CD8-positive, alpha-beta T cell (primary cell): ENCODE measurements at regions of chr12 and their contacts with region 1.

Region 1: DNA sequence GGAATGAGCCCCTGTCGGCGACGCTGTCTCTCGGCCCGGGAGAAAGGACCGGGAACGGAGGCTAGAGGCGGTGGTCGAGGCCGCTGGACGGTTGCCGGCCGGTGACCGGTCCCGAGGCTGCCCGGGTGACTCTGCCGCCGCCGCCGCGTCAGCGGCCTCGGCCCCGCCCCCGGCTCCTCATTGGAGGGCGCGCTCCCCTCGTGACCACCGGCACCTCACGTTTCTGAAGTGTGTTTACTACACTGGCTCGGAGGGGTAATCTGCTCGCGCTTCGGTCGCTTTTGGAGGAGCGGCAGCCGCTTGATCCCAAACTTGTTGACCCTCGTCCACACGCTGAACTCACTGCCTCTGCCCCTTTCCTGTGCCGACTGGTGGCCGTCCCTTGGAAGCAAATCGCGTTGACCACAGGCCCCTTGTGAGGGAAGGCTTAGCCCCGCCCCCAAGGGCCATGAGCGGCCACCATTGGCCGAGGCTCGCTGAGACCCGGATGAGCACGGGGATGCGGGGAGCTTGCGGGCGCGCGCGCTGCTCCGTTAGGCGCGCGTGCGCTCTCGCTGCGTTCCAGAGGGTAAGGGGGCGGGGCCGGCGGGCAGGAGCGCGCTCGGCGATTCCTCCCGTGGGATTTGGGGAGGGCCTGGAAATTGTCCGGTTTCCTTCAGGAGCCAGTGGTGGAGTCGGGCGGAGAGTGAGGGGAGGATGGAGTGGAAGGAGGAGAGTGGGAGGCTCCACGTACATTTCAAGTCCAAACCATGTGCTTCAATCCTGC is at the start of gene CRY1:
- DNase-seq: peak; percentile 85 to 96 (median 92)
- ATAC-seq: peak; percentile 75
- H3K4me3 ChIP-seq: peak within 1 kb of the TSS; percentile 87 to 97
- H3K4me3 Mint-ChIP-seq: no peak within 1 kb of the TSS
- H3K27ac ChIP-seq: peak within 1 kb of the TSS; percentile 97 to 99
- H3K27ac Mint-ChIP-seq: no peak within 1 kb of the TSS
- H3K4me1 ChIP-seq: peaks cover 20% of the 10 kb centered on the region
- H3K4me1 Mint-ChIP-seq: peaks cover 16% of the 10 kb centered on the region
- H3K27me3 ChIP-seq: peaks cover 0 to 4% of the 10 kb centered on the region in 2 experiments
- H3K27me3 Mint-ChIP-seq: peaks cover 10% of the 10 kb centered on the region
- CTCF ChIP-seq: no peak
- total RNA-seq, gene CRY1: 80.8 to 83.0 TPM

Region 2: GRCh38 chr12:106302401-106303201 is 791.0 kb before region 1 on chr12 and contains the start of gene TCP11L2:
- CTCF ChIA-PET with region 1: no interaction called
- POLR2A ChIA-PET with region 1: interaction called, 3 read pairs
- intact Hi-C with region 1: loop called (anchors 1 to 2 kb)
- DNase-seq: peak; percentile 88 to 96 (median 93)
- ATAC-seq: peak; percentile 63
- H3K4me3 ChIP-seq: peak within 1 kb of the TSS; percentile 98 to 100
- H3K4me3 Mint-ChIP-seq: peak within 1 kb of the TSS; percentile 96
- H3K27ac ChIP-seq: peak within 1 kb of the TSS; percentile 99 to 100
- H3K27ac Mint-ChIP-seq: peak within 1 kb of the TSS; percentile 100
- H3K4me1 ChIP-seq: peaks cover 51% of the 10 kb centered on the region
- H3K4me1 Mint-ChIP-seq: peaks cover 61% of the 10 kb centered on the region
- H3K27me3 ChIP-seq: no peaks in the 10 kb centered on the region
- H3K27me3 Mint-ChIP-seq: no peaks in the 10 kb centered on the region
- CTCF ChIP-seq: no peak
- total RNA-seq, gene TCP11L2: 130 to 133 TPM

Region 3: DNA sequence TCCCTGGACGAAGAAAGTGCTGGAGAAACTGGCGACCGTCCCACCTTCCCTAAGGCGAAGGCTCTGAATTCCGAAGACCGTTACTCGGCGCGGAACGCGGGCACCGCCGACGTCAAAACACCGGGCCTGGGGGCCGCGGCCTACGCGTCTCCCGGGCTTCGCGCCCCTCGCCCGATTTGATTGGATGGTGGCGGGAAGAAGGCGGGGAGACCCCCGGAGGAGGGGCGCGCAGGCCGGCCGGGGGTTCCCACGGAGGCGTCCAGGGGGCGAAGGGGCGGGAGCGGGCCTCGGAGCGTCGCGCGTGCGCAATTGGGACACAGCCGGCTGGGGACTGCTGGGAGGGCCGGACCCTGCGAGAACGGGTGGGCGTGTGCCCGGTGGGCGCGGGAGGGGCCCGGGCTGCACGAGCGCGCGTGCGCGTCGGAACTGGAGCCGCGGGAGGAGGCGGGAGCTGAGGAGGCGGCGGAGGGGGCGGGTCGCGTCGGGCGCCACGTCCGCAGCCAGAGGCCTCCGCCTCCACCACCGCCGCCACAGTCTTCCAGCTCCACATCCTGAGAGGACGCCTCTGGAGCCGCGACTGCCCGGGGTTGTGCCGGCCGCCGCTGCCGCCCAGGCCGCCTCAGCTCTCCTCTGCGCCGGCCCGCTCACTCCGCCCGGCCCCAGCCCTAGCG is 138.1 kb before region 1 on chr12 and contains the start of gene TMEM263:
- CTCF ChIA-PET with region 1: no interaction called
- POLR2A ChIA-PET with region 1: interaction called, 6 read pairs
- intact Hi-C with region 1: loop called (anchors 1 kb)
- DNase-seq: peak; percentile 83 to 98 (median 93)
- ATAC-seq: peak; percentile 81
- H3K4me3 ChIP-seq: peak within 1 kb of the TSS; percentile 87 to 93
- H3K4me3 Mint-ChIP-seq: peak within 1 kb of the TSS; percentile 97
- H3K27ac ChIP-seq: peak within 1 kb of the TSS; percentile 76 to 90
- H3K27ac Mint-ChIP-seq: peak within 1 kb of the TSS; percentile 96
- H3K4me1 ChIP-seq: peaks cover 18% of the 10 kb centered on the region
- H3K4me1 Mint-ChIP-seq: peaks cover 41% of the 10 kb centered on the region
- H3K27me3 ChIP-seq: no peaks in the 10 kb centered on the region
- H3K27me3 Mint-ChIP-seq: no peaks in the 10 kb centered on the region
- CTCF ChIP-seq: no peak
- total RNA-seq, gene TMEM263: 34.3 to 35.3 TPM

Region 4: DNA sequence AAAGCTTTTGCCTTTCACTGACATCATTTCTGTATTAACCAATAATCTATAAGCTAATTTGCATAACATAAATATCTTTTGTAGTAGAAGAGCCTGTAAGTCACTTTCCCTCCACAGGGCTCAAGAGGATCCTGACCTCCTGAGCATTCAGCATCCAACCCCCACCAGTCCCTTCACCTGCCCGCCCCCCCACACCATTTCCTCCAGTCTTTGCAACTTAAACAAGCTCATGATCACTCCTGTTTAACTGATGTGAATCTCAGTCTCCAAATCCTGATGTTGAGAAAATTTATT is 11.8 kb after region 1 on chr12:
- CTCF ChIA-PET with region 1: interaction called, 67 read pairs
- POLR2A ChIA-PET with region 1: interaction called, 5 read pairs
- intact Hi-C with region 1: loop called (anchors 1 kb)
- DNase-seq: no peak
- ATAC-seq: peak; percentile 38
- H3K4me3 ChIP-seq: no peak overlapping the region
- H3K4me3 Mint-ChIP-seq: no peak overlapping the region
- H3K27ac ChIP-seq: no peak overlapping the region
- H3K27ac Mint-ChIP-seq: no peak overlapping the region
- H3K4me1 ChIP-seq: no peaks in the 10 kb centered on the region
- H3K4me1 Mint-ChIP-seq: peaks cover 3% of the 10 kb centered on the region
- H3K27me3 ChIP-seq: no peaks in the 10 kb centered on the region
- H3K27me3 Mint-ChIP-seq: peaks cover 4% of the 10 kb centered on the region
- CTCF ChIP-seq: no peak

Region 5: DNA sequence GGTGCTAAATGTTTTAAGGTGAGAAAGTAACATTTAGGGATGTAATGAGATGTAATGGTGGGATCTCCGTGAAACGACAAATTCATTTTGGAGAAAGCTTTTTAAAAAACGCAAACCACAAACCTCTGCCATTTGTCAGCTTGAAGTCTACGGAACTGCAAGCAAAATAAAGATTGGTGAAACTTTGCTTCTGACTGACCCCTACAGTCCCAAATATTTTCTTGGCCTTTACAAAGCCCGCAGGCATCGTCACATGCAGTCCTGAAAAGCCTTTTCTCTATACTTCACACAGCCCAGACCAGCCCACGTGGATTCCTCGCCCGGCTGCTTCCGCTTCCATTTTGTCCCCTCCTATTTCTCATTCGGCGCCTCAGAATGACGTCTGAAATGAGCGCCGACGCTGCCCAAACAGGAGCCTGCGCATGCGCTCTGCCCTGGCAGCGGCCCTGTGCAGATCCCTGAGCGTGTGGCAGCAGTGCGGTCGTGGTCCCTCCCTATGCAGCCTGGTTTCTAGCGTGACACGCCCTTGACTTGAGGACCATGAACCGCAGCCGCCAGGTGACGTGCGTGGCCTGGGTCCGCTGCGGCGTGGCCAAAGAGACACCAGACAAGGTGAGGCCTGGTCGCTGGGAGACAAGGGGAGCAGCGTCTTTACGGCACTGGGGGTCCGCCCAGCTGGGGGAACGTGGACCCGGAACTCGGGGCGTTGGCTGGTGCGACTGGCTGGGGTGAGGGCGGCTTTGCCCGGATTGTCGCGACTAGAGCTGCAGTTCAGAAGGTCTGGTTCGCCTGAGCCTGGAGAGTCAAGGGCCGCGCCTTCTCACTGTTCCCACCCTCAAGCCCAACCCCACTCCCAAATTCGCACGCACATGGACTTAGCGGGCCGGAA is 592.0 kb after region 1 on chr12 and contains the start of gene PWP1:
- CTCF ChIA-PET with region 1: no interaction called
- POLR2A ChIA-PET with region 1: no interaction called
- intact Hi-C with region 1: loop called in 1 of 2 experiments (anchors 1 kb)
- DNase-seq: peak; percentile 90 to 98 (median 96)
- ATAC-seq: peak; percentile 84
- H3K4me3 ChIP-seq: peak within 1 kb of the TSS; percentile 75 to 82
- H3K4me3 Mint-ChIP-seq: peak within 1 kb of the TSS; percentile 98
- H3K27ac ChIP-seq: peak within 1 kb of the TSS; percentile 74 to 90
- H3K27ac Mint-ChIP-seq: peak within 1 kb of the TSS; percentile 98
- H3K4me1 ChIP-seq: peaks cover 20% of the 10 kb centered on the region
- H3K4me1 Mint-ChIP-seq: peaks cover 34% of the 10 kb centered on the region
- H3K27me3 ChIP-seq: no peaks in the 10 kb centered on the region
- H3K27me3 Mint-ChIP-seq: no peaks in the 10 kb centered on the region
- CTCF ChIP-seq: no peak
- total RNA-seq, gene PWP1: 27.7 to 28.8 TPM

Region 6: GRCh38 chr12:108856428-108857157 is 1763.0 kb after region 1 on chr12:
- CTCF ChIA-PET with region 1: no interaction called
- POLR2A ChIA-PET with region 1: no interaction called
- intact Hi-C with region 1: loop called in 1 of 2 experiments (anchors 5 kb)
- DNase-seq: peak; percentile 27 to 92 (median 64)
- ATAC-seq: peak; percentile 70
- H3K4me3 ChIP-seq: peak overlapping the region; percentile 58 to 71
- H3K4me3 Mint-ChIP-seq: peak overlapping the region; percentile 98
- H3K27ac ChIP-seq: peak overlapping the region; percentile 54 to 77
- H3K27ac Mint-ChIP-seq: peak overlapping the region; percentile 97
- H3K4me1 ChIP-seq: peaks cover 27% of the 10 kb centered on the region
- H3K4me1 Mint-ChIP-seq: peaks cover 46% of the 10 kb centered on the region
- H3K27me3 ChIP-seq: peaks cover 0 to 2% of the 10 kb centered on the region in 2 experiments
- H3K27me3 Mint-ChIP-seq: no peaks in the 10 kb centered on the region
- CTCF ChIP-seq: no peak